ENCODE measurements at regions of chr15 and their contacts with region 1.

Region 1: DNA sequence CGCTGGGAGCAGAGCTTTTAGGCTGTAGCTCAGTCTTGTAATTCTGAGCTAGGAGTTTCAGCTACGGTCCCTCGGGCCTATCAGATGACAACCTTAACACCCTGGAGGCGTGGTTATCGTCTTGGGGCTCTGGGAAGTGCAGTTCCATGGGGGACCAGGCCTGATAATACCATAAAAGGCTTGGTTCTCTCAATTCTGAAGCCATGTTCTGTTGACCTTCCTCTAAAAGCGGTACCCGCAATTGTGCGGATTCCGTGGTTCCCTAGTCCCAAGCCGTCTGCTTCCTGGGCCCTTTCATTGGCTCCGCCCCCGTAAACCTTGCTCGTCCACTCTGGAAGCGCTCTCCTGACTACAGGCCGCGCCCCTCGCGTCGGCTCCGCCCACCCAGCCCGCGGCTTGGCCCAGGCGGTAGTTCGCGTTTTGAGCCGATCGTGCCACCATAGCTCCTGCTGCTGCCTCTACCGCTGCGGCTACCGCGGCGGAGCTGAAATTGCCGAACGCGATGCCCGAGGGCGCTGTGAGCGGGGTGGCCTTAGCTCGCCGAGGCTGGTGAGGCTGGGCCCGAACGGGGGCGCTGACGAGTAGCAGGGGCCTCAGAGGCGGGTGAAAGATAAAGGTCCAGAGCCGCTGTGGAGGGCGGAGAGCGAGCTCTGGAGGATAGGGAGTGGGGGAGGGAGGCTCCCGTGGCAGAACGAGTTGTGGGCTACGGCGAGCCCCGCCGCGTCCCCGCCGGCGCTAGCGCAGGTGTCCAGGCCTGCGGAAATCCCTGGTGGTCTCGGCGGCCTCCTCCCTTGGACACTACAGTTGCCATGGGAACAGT is at the start of gene MAPKBP1:
- DNase-seq: peak; percentile 98 to 99 (median 98)
- ATAC-seq: peak; percentile 96
- H3K4me3 ChIP-seq: peak within 1 kb of the TSS; percentile 64 to 90
- H3K27ac ChIP-seq: peak within 1 kb of the TSS; percentile 85 to 88
- H3K4me1 ChIP-seq: peaks cover 29 to 46% of the 10 kb centered on the region in 2 donors
- H3K27me3 ChIP-seq: no peaks in the 10 kb centered on the region
- CTCF ChIP-seq: peak; percentile 36 to 38
- polyA plus RNA-seq, gene MAPKBP1: 18.5 to 24.9 (median 22.9) TPM

Region 2: DNA sequence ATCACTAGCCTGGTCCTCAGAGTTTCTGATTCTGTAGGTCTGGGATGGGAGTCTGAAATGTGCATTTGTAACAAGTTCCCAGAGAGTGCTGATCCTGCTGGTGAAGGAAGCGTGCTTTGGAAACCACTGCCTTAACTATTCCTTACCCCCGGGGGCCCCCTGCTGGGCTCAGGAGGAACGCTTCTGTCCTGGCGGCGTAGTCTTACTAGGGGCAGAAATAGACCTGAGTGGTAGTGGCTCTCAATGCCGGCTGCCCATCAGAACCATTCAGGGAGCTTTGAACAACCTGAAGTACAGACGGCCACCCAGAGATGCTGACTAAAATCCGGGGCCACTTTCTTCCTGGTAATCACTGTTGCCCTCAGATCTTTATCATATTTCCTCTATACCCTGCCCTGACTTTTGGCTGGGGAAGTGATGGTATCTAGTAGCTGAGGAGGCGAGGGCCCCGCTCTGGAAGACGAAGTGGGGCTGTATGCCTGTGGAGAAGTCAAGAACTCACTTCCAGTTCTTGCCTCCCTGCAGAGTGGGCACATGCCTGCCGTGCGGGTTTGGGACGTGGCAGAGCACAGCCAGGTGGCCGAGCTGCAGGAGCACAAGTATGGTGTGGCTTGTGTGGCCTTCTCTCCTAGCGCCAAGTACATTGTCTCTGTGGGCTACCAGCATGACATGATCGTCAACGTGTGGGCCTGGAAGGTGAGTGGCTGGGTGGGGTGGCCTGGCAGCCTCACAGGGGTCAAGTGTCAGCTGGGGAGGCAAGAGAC is 37.3 kb after region 1 on chr15:
- intact Hi-C with region 1: loop called in 1 of 2 experiments (anchors 5 kb)
- DNase-seq: peak; percentile 75 to 92 (median 86)
- ATAC-seq: peak; percentile 95
- H3K4me3 ChIP-seq: no peak overlapping the region
- H3K27ac ChIP-seq: no peak overlapping the region
- H3K4me1 ChIP-seq: peaks cover 0 to 19% of the 10 kb centered on the region in 2 donors
- H3K27me3 ChIP-seq: no peaks in the 10 kb centered on the region
- CTCF ChIP-seq: peak; percentile 84 to 88

Measured in left lung (tissue), 14 donors.